PC-9 (cell line): ENCODE measurements at regions of chr5 and their contacts with region 1.

Region 1: DNA sequence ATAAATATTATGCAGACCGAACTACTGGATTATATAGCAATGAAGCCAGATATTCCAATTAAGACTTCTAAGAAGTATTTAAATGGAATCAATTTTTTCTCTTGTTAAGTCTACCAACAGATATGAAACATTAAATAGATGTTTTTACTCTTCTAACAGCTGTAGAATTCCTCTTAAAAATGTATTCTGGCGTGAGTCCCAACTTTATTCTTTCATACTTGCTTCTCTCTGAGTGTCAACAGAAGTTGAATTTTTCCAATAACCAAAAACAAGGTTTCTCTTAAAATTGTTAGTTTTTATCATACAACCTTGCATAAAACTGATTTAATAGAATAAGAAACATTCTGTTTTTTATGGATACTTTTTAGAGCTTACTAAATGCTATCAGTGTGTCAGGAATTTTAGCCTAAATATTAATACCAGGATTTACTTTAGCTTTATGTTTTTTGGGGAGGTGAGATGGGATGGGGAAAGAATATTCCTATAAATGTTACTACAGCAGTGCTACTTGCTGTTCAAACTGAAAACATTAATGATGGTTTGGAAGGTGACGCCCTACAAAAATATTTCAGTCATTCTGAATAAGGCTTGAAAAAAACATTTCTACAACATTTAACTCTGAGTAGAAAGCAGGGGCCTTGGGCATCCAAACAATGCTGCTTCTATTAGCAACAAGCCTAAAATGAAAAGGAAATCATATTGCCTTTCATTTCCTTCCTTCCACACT is 15.9 kb upstream of the DAB2 start:
- DNase-seq: no peak
- H3K4me3 ChIP-seq: no peak overlapping the region
- H3K27ac ChIP-seq: no peak overlapping the region
- H3K4me1 ChIP-seq: no peaks in the 10 kb centered on the region
- H3K27me3 ChIP-seq: no peaks in the 10 kb centered on the region
- CTCF ChIP-seq: no peak

Region 2: DNA sequence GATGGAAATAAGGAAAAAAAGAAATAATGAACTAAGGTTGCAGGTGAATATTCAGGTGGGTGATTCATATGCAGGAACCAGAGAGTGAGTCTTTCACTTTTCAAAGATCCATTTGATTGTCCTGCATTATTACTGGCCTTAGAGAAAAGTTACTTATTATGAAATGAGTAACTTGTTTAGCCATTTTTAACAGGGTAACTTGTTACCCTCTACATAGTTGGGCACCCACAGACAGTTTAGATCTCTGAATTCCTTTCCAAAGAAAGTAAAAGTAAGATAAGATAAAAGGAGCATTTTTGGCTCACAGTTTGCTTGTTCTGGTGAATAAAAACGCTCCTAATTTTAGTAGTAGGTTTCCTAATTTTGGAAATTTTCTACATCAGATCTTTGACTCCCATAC is 38.1 kb after region 1 on chr5:
- CTCF ChIA-PET with region 1: no interaction called
- POLR2A ChIA-PET with region 1: interaction called, 4 read pairs
- intact Hi-C with region 1: loop called (anchors 5 kb)
- DNase-seq: peak in 1 of 2 experiments; percentile 22
- H3K4me3 ChIP-seq: no peak overlapping the region
- H3K27ac ChIP-seq: no peak overlapping the region
- H3K4me1 ChIP-seq: no peaks in the 10 kb centered on the region
- H3K27me3 ChIP-seq: no peaks in the 10 kb centered on the region
- CTCF ChIP-seq: no peak